Activated B cell treated with CpG ODN at 0.5 μM for 24 hours (primary cell): ENCODE measurements at regions of chr17 and their contacts with region 1.

Region 1: DNA sequence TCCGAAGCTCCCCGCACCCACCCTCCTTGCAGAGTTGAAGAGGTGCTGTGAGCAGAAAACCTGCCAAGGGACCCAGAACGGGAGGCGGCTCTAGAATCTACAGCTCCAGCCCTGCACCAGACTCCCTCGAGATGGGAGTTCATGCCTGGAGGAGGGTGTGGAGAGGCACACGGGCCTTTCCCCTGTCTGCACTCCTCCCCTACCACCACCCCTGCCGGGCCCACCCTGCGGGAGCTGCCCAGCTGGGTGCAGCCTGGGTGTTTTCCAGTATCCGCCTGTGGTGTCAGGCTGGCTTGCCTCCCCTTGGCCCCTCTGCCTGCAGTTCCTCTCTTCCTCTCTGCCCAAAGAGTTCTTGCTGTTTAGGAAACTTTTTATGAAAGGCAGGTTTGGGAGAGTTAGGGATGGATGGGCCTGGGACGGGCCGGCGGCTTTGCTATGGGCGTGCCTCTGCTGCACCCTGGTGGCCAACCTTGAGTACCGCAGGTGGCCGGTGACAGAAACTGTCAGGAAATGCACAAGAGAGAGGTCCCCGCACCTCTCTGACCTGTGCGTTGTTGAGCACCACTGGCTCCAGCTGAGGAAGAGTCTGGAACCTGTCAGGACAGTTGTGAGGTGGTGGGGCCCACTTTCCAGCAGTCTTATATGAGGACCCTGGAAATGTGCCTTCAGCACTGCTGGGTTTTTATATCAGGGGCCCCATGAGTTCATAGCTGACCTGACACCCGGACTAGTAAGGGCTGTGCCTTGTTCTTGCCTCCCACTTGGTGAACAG is 354.1 kb downstream of the SEC14L1 start:
- DNase-seq: peak; percentile 73
- ATAC-seq: peak; percentile 64
- H3K4me3 Mint-ChIP-seq: peak overlapping the region; percentile 15
- H3K27ac Mint-ChIP-seq: peak overlapping the region; percentile 77
- H3K4me1 Mint-ChIP-seq: peaks cover 27% of the 10 kb centered on the region
- H3K27me3 Mint-ChIP-seq: no peaks in the 10 kb centered on the region
- CTCF ChIP-seq: peak; percentile 77

Region 2: DNA sequence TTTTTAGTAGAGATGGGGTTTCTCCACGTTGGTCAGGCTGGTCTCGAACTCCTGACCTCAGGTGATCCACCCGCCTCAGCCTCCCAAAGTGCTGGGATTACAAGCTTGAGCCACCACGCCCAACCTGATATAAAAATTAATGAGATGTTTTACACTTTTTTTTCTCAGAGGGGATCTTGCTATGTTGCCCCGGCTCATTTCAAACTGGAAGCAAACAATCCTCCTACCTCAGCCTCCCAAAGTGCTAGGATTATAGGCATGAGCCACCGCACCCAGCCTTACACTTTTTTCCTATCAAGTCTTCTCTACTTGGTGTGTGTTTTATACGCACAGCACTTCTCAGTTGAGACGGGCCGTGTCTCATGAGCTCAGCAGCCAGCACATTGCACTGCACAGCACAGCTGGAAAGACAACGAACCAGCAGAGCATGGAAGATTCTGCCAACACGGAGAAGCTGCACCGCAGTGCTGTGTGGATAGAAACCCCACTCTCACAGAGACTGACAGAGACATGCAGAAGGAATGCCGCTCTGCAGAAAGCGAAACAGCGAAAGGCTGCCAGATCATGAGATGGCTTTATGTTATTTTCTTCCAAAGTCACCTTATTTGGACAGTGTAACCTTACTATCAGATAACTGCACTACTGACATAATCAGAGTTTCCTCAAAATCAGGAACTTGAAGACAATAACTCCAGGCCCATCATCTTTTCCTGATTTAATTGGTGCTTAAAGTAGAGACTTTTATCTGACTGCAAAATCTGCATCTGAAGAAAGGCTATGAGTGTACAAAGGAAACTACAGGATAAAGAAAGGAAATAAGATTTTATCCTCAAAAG is 1180.2 kb before region 1 on chr17:
- CTCF ChIA-PET with region 1: no interaction called
- POLR2A ChIA-PET with region 1: no interaction called
- intact Hi-C with region 1: no loop called
- DNase-seq: no peak
- ATAC-seq: no peak
- H3K4me3 Mint-ChIP-seq: no peak overlapping the region
- H3K27ac Mint-ChIP-seq: no peak overlapping the region
- H3K4me1 Mint-ChIP-seq: peaks cover under 1% of the 10 kb centered on the region
- H3K27me3 Mint-ChIP-seq: no peaks in the 10 kb centered on the region
- CTCF ChIP-seq: no peak

Region 3: DNA sequence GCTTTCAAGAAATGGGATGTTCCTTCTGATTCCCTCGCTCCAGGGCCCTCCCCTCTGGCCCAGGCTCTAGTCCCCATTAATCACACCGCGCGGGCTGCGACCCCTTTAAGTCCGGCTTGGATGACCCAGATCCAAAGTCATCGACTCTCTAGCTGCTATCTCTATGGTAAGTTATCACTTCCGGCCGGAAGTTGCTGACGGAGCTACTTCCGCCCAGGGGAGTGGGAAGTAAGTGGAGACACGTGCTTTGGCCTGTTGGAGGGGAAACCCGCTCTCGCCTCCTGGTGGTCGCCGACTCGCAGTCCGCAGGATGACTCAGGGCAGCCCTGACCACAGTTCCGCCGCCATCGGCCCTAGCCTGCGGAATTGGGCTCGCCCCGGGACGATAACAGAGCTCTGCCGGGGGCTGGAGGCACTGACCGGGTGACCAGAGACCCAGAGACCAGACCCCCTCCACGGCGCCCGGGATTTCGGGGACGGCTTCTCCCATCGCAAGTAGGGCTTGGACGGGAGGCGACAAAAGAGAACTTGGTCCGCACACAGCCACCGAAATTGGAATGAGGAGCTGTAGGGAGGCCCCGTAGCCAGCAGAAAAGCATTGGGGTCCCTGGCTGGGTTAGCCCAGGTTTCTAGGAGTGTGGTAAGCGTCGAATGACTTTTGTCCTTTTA is 406.3 kb before region 1 on chr17:
- CTCF ChIA-PET with region 1: no interaction called
- POLR2A ChIA-PET with region 1: no interaction called
- intact Hi-C with region 1: loop called (anchors 5 kb)
- DNase-seq: peak; percentile 84
- ATAC-seq: peak; percentile 89
- H3K4me3 Mint-ChIP-seq: peak overlapping the region; percentile 95
- H3K27ac Mint-ChIP-seq: peak overlapping the region; percentile 95
- H3K4me1 Mint-ChIP-seq: peaks cover 52% of the 10 kb centered on the region
- H3K27me3 Mint-ChIP-seq: peaks cover 3% of the 10 kb centered on the region
- CTCF ChIP-seq: no peak

Region 4: GRCh38 chr17:77331301-77331864 is 163.5 kb before region 1 on chr17:
- CTCF ChIA-PET with region 1: interaction called, 40 read pairs
- POLR2A ChIA-PET with region 1: interaction called, 9 read pairs
- intact Hi-C with region 1: loop called (anchors 1 kb)
- DNase-seq: peak; percentile 90
- ATAC-seq: peak; percentile 91
- H3K4me3 Mint-ChIP-seq: peak overlapping the region; percentile 76
- H3K27ac Mint-ChIP-seq: peak overlapping the region; percentile 78
- H3K4me1 Mint-ChIP-seq: peaks cover 57% of the 10 kb centered on the region
- H3K27me3 Mint-ChIP-seq: no peaks in the 10 kb centered on the region
- CTCF ChIP-seq: peak; percentile 32

Region 5: DNA sequence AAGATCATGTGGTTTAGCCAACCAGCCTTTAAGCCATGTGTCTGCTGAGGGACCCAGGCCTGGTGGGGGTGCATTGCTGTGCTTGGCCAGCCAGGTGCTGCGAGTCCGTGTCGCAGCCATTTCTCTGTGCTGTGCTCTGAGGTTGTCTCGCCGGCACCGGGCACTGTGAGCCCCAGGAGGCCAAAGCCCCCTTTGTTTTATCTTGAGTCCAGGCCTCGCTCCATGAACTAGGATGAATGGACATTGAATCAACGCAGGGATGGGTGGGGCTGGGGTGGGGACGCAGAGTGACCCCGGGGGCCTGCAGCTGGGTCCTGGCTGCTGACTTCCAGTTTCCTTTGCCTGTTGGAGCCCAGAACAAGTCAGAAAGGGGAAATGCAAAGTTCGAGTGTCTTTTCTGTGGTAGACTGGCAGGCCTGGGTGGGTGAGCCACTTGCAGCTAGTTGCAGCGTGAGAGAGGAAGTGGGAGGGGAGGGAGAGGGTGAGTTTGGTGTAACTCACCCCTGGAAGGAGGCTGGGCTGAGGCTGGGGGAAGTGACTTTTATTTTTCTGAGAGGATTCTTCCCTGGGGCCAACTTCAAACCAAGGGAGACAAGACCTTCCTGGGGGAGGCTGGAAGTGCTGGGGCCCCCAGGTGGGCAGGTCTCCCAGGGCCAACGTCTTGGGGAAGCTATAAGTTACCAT is 29.4 kb before region 1 on chr17:
- CTCF ChIA-PET with region 1: interaction called, 8 read pairs
- POLR2A ChIA-PET with region 1: interaction called, 16 read pairs
- intact Hi-C with region 1: loop called (anchors 2 kb)
- DNase-seq: peak; percentile 62
- ATAC-seq: peak; percentile 81
- H3K4me3 Mint-ChIP-seq: peak overlapping the region; percentile 75
- H3K27ac Mint-ChIP-seq: peak overlapping the region; percentile 93
- H3K4me1 Mint-ChIP-seq: peaks cover 94% of the 10 kb centered on the region
- H3K27me3 Mint-ChIP-seq: no peaks in the 10 kb centered on the region
- CTCF ChIP-seq: no peak

Region 6: GRCh38 chr17:77476931-77477877 is 17.6 kb before region 1 on chr17:
- CTCF ChIA-PET with region 1: interaction called, 11 read pairs
- POLR2A ChIA-PET with region 1: interaction called, 13 read pairs
- intact Hi-C with region 1: no loop called
- DNase-seq: no peak
- ATAC-seq: no peak
- H3K4me3 Mint-ChIP-seq: no peak overlapping the region
- H3K27ac Mint-ChIP-seq: peak overlapping the region; percentile 61
- H3K4me1 Mint-ChIP-seq: peaks cover 83% of the 10 kb centered on the region
- H3K27me3 Mint-ChIP-seq: no peaks in the 10 kb centered on the region
- CTCF ChIP-seq: no peak

Region 7: GRCh38 chr17:77507111-77507885 is 12.4 kb after region 1 on chr17:
- CTCF ChIA-PET with region 1: no interaction called
- POLR2A ChIA-PET with region 1: no interaction called
- intact Hi-C with region 1: no loop called
- DNase-seq: no peak
- ATAC-seq: no peak
- H3K4me3 Mint-ChIP-seq: no peak overlapping the region
- H3K27ac Mint-ChIP-seq: no peak overlapping the region
- H3K4me1 Mint-ChIP-seq: no peaks in the 10 kb centered on the region
- H3K27me3 Mint-ChIP-seq: no peaks in the 10 kb centered on the region
- CTCF ChIP-seq: no peak